Activated naive CD4-positive, alpha-beta T cell treated with anti-CD3 and anti-CD28 coated beads for 36 hours (primary cell): ENCODE measurements at regions of chr3 and their contacts with region 1.

Region 1: DNA sequence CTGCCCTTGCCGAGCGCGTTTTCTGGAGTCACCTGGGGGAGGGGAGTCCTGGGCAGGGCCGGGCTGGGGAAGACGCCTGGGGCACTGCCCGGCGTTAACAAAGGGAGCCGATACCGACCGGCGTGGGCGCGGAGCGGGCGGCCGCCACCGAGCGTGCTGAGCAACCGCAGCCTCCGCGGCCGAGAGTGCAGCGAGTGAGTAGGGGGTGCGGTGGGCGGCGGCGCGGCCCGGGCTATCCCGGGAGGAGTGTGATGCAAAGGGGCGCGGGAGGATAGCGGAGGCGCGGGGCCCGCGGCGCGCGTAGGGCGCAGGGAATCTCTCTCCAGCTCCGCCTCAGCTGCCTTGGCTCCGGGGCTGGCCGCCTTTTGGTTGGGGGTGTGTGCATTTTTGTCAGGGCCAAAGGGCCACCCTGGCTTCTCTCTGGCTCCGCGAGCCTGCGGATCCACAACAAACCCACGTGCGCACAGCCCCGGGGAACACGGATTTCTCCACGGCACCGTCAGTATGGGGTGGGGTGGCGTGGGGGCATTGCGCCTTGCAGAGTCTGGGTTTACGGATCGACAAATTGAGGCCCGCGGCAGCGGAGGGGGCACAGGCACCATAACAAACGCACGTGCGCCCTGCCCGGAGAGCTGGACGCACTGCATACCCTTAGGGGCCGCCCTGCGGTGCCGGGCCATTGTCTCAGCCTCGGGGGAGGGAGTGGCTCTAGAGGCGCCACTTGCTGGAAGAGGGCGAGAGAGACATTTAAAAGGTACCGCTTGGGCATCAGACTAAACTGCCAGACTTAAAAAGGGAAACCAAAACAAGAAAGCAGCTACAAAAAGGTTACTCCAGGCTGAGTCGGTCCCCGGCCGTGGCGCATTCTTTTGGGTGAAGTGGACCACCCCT is 560 bp downstream of the ST6GAL1 start:
- DNase-seq: peak; percentile 74
- H3K4me3 Mint-ChIP-seq: peak overlapping the region; percentile 83
- H3K27ac Mint-ChIP-seq: peak overlapping the region; percentile 85
- H3K4me1 Mint-ChIP-seq: peaks cover 22% of the 10 kb centered on the region
- H3K27me3 Mint-ChIP-seq: no peaks in the 10 kb centered on the region

Region 2: DNA sequence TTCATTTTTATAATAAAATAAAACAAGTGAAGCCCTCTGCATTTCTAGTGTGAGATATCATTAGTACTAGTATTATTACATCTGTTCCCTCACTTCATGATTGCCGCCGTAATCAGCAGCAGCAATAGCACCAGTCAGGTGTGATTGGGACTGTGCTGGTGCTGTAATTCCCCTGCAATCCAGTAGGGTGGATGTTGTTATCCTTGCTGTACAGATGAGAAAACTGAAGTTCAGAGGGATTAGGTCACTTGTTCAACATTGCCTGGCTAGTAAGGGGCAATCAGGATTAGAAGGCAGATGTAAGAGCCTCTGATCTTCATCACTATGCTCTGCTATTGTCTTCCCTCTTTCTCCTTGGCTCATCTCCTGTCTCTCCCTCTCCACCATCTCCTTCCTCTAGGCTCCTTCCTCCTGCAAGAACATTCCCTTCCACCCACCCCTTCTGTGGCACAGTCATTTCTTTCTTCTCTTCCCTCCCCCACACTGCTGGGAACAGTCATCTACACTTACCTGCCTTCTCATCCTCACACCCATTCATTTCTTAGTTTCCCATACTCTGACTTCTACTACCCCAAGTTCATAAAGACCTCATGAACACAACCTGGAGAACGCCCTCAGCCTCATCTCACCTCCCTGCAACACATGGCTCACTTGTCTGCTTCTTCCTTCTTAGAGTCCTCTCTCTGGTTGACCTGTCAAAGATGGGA is 416.4 kb before region 1 on chr3:
- CTCF ChIA-PET with region 1: no interaction called
- intact Hi-C with region 1: no loop called
- DNase-seq: peak; percentile 71
- H3K4me3 Mint-ChIP-seq: no peak overlapping the region
- H3K27ac Mint-ChIP-seq: peak overlapping the region; percentile 78
- H3K4me1 Mint-ChIP-seq: peaks cover 79% of the 10 kb centered on the region
- H3K27me3 Mint-ChIP-seq: no peaks in the 10 kb centered on the region

Region 3: DNA sequence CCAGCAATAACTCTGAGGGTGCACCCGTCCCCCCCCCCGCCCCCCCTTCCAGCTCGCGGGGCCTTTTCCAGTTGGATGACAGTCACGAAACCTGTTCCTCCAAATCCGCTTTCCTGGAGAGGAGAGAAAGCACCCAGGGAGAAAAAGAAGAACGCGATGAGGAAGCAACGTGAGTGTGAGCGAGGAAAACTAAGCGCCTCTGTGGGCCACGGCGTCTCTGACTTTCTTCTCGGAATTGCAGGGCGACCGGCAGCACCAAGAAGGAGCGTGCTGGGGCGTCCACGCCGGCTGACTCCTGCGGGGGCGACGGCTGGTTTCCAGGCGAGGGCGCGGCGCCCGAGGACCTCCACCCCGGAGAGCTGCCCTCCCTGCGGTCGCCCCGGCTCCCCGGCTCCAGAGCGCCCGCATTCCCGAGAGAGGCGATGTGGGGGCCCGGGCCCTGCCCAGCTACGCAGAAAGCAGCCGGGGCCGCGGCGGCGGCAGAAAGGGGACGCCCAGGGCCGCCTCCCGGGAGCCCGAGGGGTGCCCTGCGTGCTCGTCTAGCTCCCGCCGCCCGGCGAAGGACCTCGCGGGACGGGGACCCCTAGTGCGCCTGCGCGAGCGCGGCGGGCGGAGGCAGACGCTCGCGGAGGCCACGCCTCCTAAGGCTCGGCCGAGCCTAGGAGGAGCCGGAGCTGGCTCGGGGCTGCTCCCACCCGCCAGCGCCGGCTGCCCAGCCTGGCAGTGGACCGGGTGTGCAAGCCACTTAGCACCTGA is 103.7 kb before region 1 on chr3:
- CTCF ChIA-PET with region 1: no interaction called
- intact Hi-C with region 1: loop called (anchors 1 kb)
- DNase-seq: peak; percentile 82
- H3K4me3 Mint-ChIP-seq: peak overlapping the region; percentile 78
- H3K27ac Mint-ChIP-seq: peak overlapping the region; percentile 69
- H3K4me1 Mint-ChIP-seq: peaks cover 30% of the 10 kb centered on the region
- H3K27me3 Mint-ChIP-seq: peaks cover 38% of the 10 kb centered on the region

Region 4: DNA sequence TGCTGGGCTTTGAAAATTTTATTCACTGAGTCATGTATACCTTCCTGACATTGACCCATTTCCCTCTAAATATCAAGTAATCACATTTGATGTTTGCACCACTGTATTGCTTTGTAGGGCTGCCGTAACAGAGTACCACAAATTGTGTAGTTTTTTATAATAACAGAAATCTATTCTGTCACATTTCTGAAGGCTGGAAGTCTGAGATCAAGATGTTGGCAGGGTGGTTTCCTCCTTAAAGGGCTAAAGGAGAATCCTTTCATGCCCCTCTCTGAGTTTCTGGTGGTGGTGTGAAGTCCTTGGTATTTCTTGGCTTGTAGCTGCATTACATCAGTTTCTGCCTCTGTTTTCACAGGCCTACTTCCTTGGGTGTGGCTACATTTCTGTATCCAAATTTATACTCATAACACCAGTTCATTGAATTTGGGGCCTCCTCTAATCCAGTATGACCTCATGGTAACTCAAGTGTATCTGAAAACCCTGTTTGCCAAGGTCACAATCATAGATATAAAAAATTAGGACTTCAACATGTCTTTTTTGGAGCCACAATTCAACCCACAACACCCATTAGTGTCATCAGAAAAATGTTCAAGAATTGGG is 29.7 kb before region 1 on chr3:
- CTCF ChIA-PET with region 1: no interaction called
- intact Hi-C with region 1: loop called (anchors 1 kb)
- DNase-seq: peak; percentile 31
- H3K4me3 Mint-ChIP-seq: no peak overlapping the region
- H3K27ac Mint-ChIP-seq: peak overlapping the region; percentile 32
- H3K4me1 Mint-ChIP-seq: peaks cover 19% of the 10 kb centered on the region
- H3K27me3 Mint-ChIP-seq: no peaks in the 10 kb centered on the region

Region 5: DNA sequence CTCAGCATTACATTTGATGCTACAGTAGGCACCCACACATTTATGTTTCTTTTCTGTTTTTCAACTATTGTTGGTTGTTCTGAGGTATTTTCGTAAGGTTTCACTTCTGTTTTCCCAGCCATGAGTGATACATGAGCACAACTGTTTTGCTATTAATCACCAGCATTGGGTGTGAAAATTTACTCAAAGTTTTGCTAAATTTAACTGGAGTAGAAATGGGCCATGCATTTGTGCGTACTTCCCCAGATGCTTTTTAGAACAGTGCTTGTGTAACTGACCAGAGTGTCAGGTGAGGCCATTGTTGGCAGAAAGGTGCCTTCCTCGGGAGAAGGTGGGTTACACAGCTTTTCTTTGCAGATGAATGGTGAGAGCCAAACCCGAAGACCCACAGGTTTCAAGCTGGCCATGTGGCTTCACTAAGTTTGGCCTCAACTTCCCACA is 69.8 kb after region 1 on chr3:
- CTCF ChIA-PET with region 1: no interaction called
- intact Hi-C with region 1: loop called (anchors 1 kb)
- DNase-seq: peak; percentile 76
- H3K4me3 Mint-ChIP-seq: peak overlapping the region; percentile 25
- H3K27ac Mint-ChIP-seq: peak overlapping the region; percentile 90
- H3K4me1 Mint-ChIP-seq: peaks cover 76% of the 10 kb centered on the region
- H3K27me3 Mint-ChIP-seq: no peaks in the 10 kb centered on the region

Region 6: GRCh38 chr3:187041362-187042307 is 110.7 kb after region 1 on chr3:
- CTCF ChIA-PET with region 1: interaction called, 3 read pairs
- intact Hi-C with region 1: loop called (anchors 1 kb)
- DNase-seq: peak; percentile 73
- H3K4me3 Mint-ChIP-seq: peak overlapping the region; percentile 60
- H3K27ac Mint-ChIP-seq: peak overlapping the region; percentile 98
- H3K4me1 Mint-ChIP-seq: peaks cover 82% of the 10 kb centered on the region
- H3K27me3 Mint-ChIP-seq: no peaks in the 10 kb centered on the region

Region 7: GRCh38 chr3:187164885-187165543 is 234.1 kb after region 1 on chr3:
- CTCF ChIA-PET with region 1: interaction called, 11 read pairs
- intact Hi-C with region 1: loop called (anchors 5 kb)
- DNase-seq: peak; percentile 47
- H3K4me3 Mint-ChIP-seq: no peak overlapping the region
- H3K27ac Mint-ChIP-seq: no peak overlapping the region
- H3K4me1 Mint-ChIP-seq: peaks cover 6% of the 10 kb centered on the region
- H3K27me3 Mint-ChIP-seq: no peaks in the 10 kb centered on the region